Natural killer cell (primary cell): ENCODE measurements at regions of chr5 and their contacts with region 1.

Region 1: DNA sequence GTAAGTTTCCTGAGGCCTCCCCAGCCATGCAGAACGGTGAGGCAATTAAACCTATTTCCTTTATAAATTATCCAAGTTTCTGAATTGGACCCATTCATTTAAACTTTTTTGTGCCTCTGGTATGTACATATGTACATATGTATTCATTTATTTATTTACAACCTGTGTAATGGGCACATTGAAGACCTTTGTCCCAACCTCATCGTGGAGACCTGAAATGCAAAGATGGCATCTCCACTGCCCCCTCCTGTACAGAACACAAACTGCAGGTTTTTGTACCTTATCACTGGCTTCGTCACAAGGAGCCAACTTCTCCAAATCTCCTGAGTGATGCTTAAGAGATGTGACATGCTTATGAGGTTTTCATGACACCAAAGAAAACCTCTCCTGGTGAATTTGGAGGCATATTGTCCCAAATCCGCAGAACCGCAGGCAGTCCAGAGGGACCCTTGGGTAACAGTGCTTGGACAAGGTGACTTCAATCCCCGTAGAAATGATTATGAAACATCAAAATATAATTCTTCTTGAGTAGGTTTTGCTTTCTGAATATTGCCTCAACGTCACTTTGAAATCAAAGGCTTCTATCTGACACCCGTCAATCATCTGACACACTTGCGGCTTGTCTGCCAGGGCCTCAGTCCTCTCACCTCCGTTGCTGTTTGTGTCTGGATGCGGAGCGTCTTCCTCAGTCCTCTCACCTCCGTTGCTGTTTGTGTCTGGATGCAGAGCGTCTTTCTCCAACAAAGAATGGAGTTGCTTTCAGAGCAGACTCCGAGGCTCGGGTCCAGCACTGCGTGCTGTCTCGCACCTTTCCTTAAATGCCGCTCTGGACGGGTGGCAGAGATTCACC is 135.0 kb upstream of the IRX4 start:
- DNase-seq: peak in 1 of 2 donors; percentile 53
- ATAC-seq: no peak
- H3K4me3 ChIP-seq: no peak overlapping the region
- H3K4me3 Mint-ChIP-seq: no peak overlapping the region
- H3K27ac ChIP-seq: no peak overlapping the region
- H3K27ac Mint-ChIP-seq: no peak overlapping the region
- H3K4me1 ChIP-seq: no peaks in the 10 kb centered on the region
- H3K4me1 Mint-ChIP-seq: no peaks in the 10 kb centered on the region
- H3K27me3 ChIP-seq: no peaks in the 10 kb centered on the region
- H3K27me3 Mint-ChIP-seq: peaks cover 0 to 13% of the 10 kb centered on the region in 2 donors
- CTCF ChIP-seq: peak; percentile 30

Region 2: GRCh38 chr5:1737790-1738405 is 279.9 kb before region 1 on chr5:
- intact Hi-C with region 1: loop called (anchors 10 kb)
- DNase-seq: peak in 1 of 2 donors; percentile 73
- ATAC-seq: peak; percentile 64 to 75 (median 66)
- H3K4me3 ChIP-seq: no peak overlapping the region
- H3K4me3 Mint-ChIP-seq: no peak overlapping the region
- H3K27ac ChIP-seq: no peak overlapping the region
- H3K27ac Mint-ChIP-seq: no peak overlapping the region
- H3K4me1 ChIP-seq: no peaks in the 10 kb centered on the region
- H3K4me1 Mint-ChIP-seq: no peaks in the 10 kb centered on the region
- H3K27me3 ChIP-seq: no peaks in the 10 kb centered on the region
- H3K27me3 Mint-ChIP-seq: peaks cover 16 to 36% of the 10 kb centered on the region in 2 donors
- CTCF ChIP-seq: peak; percentile 83